Upper lobe of right lung (tissue), 1 donor: ENCODE measurements at regions of chr5 and their contacts with region 1.

Region 1: DNA sequence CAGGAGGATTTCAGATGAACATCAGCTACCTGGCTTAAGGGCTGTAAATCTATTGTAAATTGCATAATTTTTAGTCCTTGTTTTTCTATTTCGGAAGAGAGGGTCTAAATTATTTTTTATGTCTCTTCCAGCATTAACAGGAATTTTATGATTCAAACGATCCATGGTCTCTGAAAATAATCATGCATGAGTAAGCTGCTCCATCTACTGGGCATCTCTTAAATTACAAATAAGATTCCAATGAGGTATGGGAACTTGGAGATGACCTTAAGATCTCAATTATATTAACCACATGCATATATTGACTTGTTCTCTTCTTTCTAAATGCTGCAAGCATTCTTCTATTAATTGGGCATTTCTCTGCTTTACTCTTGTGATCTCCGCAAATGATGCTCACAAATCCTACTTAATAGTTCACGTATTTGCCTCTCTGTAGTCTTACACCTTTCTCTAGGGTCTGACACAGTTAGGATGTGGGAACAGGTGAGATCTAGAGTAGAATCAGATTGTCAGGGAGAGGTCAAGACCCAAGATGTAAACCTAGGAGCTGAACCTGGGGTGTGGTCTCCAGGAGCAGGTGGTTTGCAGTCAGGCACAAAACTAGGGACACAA is 86.9 kb downstream of the NUDT12 start:
- DNase-seq: no peak
- ATAC-seq: peak; percentile 69
- H3K4me3 ChIP-seq: no peak overlapping the region
- H3K27ac ChIP-seq: no peak overlapping the region
- H3K4me1 ChIP-seq: no peaks in the 10 kb centered on the region
- H3K27me3 ChIP-seq: no peaks in the 10 kb centered on the region
- CTCF ChIP-seq: peak; percentile 71

Region 2: GRCh38 chr5:103232393-103232999 is 243.2 kb before region 1 on chr5:
- intact Hi-C with region 1: loop called (anchors 5 kb)
- DNase-seq: no peak
- ATAC-seq: peak; percentile 90
- H3K4me3 ChIP-seq: no peak overlapping the region
- H3K27ac ChIP-seq: no peak overlapping the region
- H3K4me1 ChIP-seq: no peaks in the 10 kb centered on the region
- H3K27me3 ChIP-seq: no peaks in the 10 kb centered on the region
- CTCF ChIP-seq: peak; percentile 91

Region 3: DNA sequence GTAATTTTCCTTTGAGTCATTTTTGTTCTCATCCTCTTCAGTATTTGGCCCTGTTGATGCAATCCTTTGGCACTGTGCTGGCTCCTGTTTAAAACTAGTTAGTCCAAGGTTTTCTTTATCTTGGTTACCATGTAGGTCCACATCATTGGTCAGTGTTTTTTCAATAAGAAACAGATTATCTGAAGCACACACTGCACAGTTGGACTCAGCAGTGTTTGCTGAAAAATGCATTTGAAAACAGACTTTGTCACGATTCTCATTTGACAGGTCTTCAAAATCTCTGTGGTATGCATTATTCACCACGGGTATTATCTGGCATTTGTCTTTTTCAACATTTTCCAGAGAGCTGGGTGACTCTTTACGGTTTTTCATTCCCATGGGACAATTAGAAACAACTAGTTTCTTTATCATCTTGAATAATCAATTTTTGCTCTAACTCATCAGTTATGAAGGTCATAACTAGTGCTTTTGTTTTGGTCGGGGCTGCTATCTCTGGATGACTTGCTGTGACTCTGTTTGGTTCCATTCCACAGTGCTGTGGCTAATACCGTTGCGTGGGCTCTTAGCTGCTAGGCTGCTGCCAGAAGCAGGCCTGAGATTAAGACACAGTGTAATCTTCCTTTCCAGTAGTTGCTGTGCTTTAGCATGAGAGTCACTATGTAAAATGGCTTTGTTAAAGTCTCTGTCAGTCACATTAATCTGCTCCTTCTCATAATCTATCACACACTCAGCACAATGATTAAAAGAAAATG is 50.6 kb after region 1 on chr5:
- intact Hi-C with region 1: no loop called
- DNase-seq: no peak
- ATAC-seq: no peak
- H3K4me3 ChIP-seq: no peak overlapping the region
- H3K27ac ChIP-seq: no peak overlapping the region
- H3K4me1 ChIP-seq: peaks cover 3% of the 10 kb centered on the region
- H3K27me3 ChIP-seq: no peaks in the 10 kb centered on the region
- CTCF ChIP-seq: no peak